ENCODE measurements at regions of chr9 and their contacts with region 1.

Region 1: GRCh38 chr9:70218767-70219166 is 40.0 kb upstream of the SMC5 start:
- DNase-seq: no peak
- H3K4me3 ChIP-seq: no peak overlapping the region
- H3K27ac ChIP-seq: no peak overlapping the region
- H3K27me3 ChIP-seq: no peaks in the 10 kb centered on the region
- CTCF ChIP-seq: no peak

Region 2: DNA sequence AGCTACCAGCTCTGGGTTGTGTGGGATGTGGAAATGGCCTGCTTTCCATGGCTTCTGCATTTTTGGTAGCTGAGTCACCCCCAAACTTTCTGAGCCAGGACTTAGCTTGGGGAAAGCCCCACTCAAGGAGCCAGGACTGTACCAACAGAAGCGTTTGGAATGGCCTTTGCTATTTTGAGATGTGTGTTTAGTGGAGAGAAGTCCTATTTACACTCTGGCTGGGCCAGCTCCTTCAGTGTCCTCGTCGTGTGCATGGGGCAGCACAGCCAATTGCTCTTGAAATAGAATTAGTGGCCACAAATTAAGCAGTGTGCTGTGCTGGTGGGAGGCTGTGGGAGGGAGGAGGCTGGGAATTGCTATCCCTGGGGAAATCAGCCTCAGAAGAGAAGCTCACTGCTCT is 842.1 kb before region 1 on chr9:
- intact Hi-C with region 1: no loop called
- DNase-seq: peak in 2 of 10 donors; percentile 45
- H3K4me3 ChIP-seq: no peak overlapping the region
- H3K27ac ChIP-seq: peak overlapping the region in 1 of 59 donors; percentile 16
- H3K27me3 ChIP-seq: no peaks in the 10 kb centered on the region
- CTCF ChIP-seq: no peak

Region 3: GRCh38 chr9:69961830-69962229 is 256.9 kb before region 1 on chr9:
- intact Hi-C with region 1: loop called in 1 of 2 experiments (anchors 10 kb)
- DNase-seq: no peak
- H3K4me3 ChIP-seq: no peak overlapping the region
- H3K27ac ChIP-seq: no peak overlapping the region
- H3K27me3 ChIP-seq: no peaks in the 10 kb centered on the region
- CTCF ChIP-seq: no peak

Region 4: GRCh38 chr9:70160686-70161600 is 57.8 kb before region 1 on chr9:
- intact Hi-C with region 1: no loop called
- DNase-seq: no peak
- H3K4me3 ChIP-seq: no peak overlapping the region
- H3K27ac ChIP-seq: no peak overlapping the region
- H3K27me3 ChIP-seq: no peaks in the 10 kb centered on the region
- CTCF ChIP-seq: no peak

Measured in dorsolateral prefrontal cortex (tissue), 120 donors.